Activated CD4-positive, alpha-beta T cell treated with anti-CD3 and anti-CD28 coated beads for 36 hours (primary cell): ENCODE measurements at regions of chr14 and their contacts with region 1.

Region 1: DNA sequence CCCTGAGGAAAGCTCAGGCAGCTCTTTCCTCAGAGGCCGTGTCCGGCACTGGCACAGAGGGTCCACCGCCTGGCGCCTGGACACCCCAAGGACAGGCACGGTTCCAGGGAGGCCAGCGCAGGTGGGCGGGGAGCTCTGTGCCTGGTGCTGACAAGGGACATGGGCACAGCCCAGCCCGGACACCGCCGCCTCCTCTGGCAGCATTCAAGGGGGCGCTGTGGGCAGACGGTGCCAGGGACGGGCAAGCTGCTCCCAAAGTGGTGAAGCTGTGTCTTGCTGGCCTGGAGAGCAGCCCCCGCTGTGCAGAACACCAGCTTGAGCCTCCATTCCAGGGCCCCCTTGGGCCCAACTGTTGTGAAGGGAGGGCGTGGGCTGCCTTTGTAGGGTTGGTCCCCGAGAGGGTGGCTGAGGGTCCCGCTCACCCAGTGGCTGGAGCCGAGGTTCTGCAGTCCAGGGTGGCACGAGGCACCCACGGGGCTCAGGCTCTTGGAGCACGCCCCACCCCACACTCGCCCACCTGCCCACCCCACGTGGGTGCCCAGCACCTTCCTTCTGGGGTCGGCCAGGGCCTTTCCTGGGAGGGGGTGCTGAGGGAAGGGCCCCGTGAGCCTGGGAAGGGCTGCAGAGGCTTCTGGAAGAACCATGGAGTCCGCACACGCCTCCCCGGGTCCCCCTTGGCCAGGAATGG is 29.2 kb upstream of the TEX22 start:
- DNase-seq: no peak
- ATAC-seq: no peak
- H3K4me3 Mint-ChIP-seq: no peak overlapping the region
- H3K27ac Mint-ChIP-seq: no peak overlapping the region
- H3K4me1 Mint-ChIP-seq: peaks cover 4% of the 10 kb centered on the region
- H3K27me3 Mint-ChIP-seq: no peaks in the 10 kb centered on the region

Region 2: GRCh38 chr14:105414456-105415371 is 45.6 kb after region 1 on chr14:
- CTCF ChIA-PET with region 1: interaction called, 4 read pairs
- POLR2A ChIA-PET with region 1: no interaction called
- intact Hi-C with region 1: loop called (anchors 2 to 5 kb)
- DNase-seq: peak; percentile 81
- ATAC-seq: peak; percentile 85
- H3K4me3 Mint-ChIP-seq: peak overlapping the region; percentile 61
- H3K27ac Mint-ChIP-seq: no peak overlapping the region
- H3K4me1 Mint-ChIP-seq: peaks cover 11% of the 10 kb centered on the region
- H3K27me3 Mint-ChIP-seq: peaks cover 17% of the 10 kb centered on the region

Region 3: DNA sequence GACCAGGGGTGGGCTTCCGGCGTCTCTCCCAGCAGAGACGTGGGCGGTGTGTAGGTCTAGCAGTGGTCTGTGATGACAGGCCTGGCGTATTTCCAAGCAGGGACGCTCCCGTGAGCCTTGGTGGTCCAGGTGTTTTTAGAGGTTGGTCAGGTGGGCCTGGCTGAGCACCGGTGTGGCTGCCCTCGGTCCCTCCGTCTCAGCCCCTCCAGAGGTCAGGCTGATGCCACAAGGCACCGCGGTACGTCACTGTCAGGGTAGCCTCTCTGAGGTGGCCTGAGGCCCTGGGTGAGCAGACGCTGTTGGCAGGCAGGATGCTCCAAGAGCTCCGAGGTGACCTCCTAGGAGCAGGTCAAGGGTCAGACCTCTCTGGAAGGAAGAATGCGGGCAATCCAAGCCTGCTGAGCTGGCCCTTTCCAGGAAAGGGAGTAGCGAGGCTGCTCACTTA is 64.1 kb after region 1 on chr14:
- CTCF ChIA-PET with region 1: interaction called, 11 read pairs
- POLR2A ChIA-PET with region 1: no interaction called
- intact Hi-C with region 1: no loop called
- DNase-seq: no peak
- ATAC-seq: no peak
- H3K4me3 Mint-ChIP-seq: no peak overlapping the region
- H3K27ac Mint-ChIP-seq: no peak overlapping the region
- H3K4me1 Mint-ChIP-seq: peaks cover 11% of the 10 kb centered on the region
- H3K27me3 Mint-ChIP-seq: no peaks in the 10 kb centered on the region

Region 4: DNA sequence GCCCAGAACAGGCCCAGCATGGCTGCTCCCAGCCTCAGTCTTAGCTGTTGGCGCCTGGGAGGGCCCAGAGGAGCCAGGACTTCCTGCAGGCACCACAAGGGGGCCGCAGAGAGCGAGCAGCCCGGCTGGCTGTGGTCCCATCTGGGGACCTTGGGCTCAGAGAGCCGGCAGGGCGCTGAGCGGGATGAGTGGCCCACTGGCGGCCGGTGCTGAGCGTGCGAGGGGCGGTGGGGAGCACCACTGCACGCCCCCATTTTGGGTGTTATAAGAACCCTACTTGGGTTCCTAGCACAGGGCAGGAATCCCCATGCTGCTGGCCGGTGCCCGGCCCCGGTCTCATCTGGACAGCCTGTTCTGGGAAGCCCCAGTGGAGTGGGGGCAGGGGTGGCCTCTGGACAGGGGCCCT is 79.6 kb after region 1 on chr14:
- CTCF ChIA-PET with region 1: interaction called, 8 read pairs
- POLR2A ChIA-PET with region 1: no interaction called
- intact Hi-C with region 1: loop called (anchors 1 to 2 kb)
- DNase-seq: peak; percentile 77
- ATAC-seq: peak; percentile 96
- H3K4me3 Mint-ChIP-seq: no peak overlapping the region
- H3K27ac Mint-ChIP-seq: no peak overlapping the region
- H3K4me1 Mint-ChIP-seq: no peaks in the 10 kb centered on the region
- H3K27me3 Mint-ChIP-seq: no peaks in the 10 kb centered on the region

Region 5: GRCh38 chr14:105480952-105481801 is 112.1 kb after region 1 on chr14:
- CTCF ChIA-PET with region 1: interaction called, 9 read pairs
- POLR2A ChIA-PET with region 1: no interaction called
- intact Hi-C with region 1: loop called in 1 of 2 experiments (anchors 2 kb)
- DNase-seq: peak; percentile 95
- ATAC-seq: peak; percentile 69
- H3K4me3 Mint-ChIP-seq: peak overlapping the region; percentile 62
- H3K27ac Mint-ChIP-seq: peak overlapping the region; percentile 87
- H3K4me1 Mint-ChIP-seq: peaks cover 48% of the 10 kb centered on the region
- H3K27me3 Mint-ChIP-seq: peaks cover 5% of the 10 kb centered on the region